Mammary epithelial cell (primary cell): ENCODE measurements at regions of chr6 and their contacts with region 1.

Region 1: DNA sequence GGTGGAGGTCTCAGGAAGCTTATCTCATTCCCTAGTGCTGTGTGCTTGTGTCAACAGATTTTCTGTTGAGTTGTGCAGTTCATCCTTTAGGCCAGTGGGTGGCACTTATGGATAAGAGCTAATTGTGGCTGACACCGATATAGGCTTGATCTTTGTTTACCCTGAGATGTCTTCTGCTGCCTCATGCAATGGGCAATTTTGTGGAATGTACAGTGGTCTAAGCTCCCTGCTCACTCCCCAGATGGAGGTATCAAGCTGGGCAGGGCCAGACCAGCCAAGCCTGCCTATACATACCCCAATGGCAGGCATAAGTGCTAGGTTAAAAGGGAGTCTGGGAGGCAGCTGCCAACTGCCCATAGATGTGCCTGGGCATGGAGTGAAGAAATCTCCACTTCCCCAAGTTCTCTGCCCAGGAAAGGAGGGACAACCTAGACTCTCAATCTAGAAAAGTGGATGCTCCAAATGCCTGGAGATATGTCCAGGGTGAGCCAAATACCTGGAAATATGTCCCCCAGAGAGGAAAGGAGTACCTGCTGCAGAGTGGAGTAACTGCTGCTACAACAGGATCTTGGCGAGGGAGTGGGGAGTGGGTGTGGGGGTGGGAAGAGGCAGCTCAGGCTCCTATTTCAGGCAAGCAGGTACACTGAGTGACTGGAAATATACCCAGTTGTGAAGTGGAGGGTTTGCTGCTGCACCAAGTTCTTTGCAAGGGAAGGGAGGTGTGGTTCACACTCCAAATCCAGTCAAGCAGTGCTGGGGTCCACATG is 53.2 kb upstream of the ARG1 start:
- DNase-seq: peak; percentile 29
- H3K4me3 ChIP-seq: no peak overlapping the region
- H3K27ac ChIP-seq: no peak overlapping the region
- H3K4me1 ChIP-seq: no peaks in the 10 kb centered on the region
- H3K27me3 ChIP-seq: peaks cover 2% of the 10 kb centered on the region
- CTCF ChIP-seq: peak; percentile 45 to 72

Region 2: DNA sequence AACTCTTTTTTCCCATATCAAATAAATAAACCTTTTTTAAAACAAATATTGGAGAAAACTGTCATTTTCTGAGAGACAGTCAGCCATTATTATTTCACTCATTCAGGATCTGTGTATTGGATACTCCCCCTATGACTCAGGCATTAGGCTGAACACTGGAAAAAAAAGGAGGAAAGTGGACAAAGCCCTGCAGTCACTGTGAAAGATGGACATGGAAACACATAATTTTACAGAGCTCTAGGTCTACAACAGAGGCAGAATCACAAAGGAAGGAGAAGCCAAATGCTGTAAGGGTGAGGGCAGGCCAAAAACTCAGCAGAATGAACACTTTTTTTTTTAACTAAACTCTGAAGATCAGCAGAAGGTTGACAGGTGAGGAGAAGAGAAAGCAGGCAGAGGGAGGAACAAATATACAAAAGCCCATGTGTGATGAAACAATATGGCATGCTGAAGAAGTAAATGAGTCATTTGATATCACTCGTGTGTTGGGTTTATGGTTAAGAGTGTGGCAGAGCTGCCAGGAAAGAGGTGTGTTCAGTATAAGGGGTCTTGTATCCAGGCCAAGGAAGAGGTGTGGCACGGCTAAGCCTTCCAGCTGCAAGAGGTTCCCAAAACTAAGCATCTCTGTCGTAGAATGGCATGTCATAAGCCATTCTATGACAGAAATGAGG is 495.9 kb before region 1 on chr6:
- CTCF ChIA-PET with region 1: no interaction called
- dilution Hi-C with region 1: no loop called
- in situ Hi-C with region 1: no loop called
- intact Hi-C with region 1: no loop called
- DNase-seq: peak; percentile 80
- H3K4me3 ChIP-seq: peak overlapping the region in 2 of 3 experiments; percentile 12 to 26
- H3K27ac ChIP-seq: peak overlapping the region; percentile 50
- H3K4me1 ChIP-seq: peaks cover 11% of the 10 kb centered on the region
- H3K27me3 ChIP-seq: no peaks in the 10 kb centered on the region
- CTCF ChIP-seq: no peak

Region 3: DNA sequence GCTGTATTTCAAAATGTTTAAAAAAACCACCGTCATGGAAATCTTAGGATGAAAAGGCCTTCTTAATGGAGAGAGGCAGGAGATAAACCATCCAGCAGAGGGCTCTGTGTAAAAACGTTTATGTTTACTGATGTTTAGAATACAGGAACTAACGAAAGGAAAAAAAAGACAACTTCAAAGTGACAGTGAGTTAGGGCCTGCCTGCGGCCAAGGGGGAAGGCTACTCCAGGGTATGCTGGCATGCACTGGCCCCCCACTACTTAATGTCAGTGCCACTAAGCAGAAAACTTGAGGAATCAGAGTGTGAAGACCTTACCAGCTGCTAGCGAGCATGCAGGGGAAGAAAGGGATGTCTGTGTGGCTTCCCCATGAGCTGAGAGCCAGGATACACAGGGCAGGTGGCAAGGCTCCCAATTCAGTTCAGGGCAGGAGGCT is 336.8 kb before region 1 on chr6:
- CTCF ChIA-PET with region 1: no interaction called
- dilution Hi-C with region 1: no loop called
- in situ Hi-C with region 1: loop called (anchors 10 to 25 kb)
- intact Hi-C with region 1: no loop called
- DNase-seq: no peak
- H3K4me3 ChIP-seq: no peak overlapping the region
- H3K27ac ChIP-seq: no peak overlapping the region
- H3K4me1 ChIP-seq: no peaks in the 10 kb centered on the region
- H3K27me3 ChIP-seq: no peaks in the 10 kb centered on the region
- CTCF ChIP-seq: peak; percentile 22 to 44

Region 4: GRCh38 chr6:131331151-131331550 is 188.7 kb before region 1 on chr6:
- CTCF ChIA-PET with region 1: no interaction called
- dilution Hi-C with region 1: no loop called
- in situ Hi-C with region 1: no loop called
- intact Hi-C with region 1: no loop called
- DNase-seq: no peak
- H3K4me3 ChIP-seq: no peak overlapping the region
- H3K27ac ChIP-seq: no peak overlapping the region
- H3K4me1 ChIP-seq: no peaks in the 10 kb centered on the region
- H3K27me3 ChIP-seq: peaks cover 5% of the 10 kb centered on the region
- CTCF ChIP-seq: no peak

Region 5: GRCh38 chr6:131627724-131628682 is 108.2 kb after region 1 on chr6 and contains the start of gene MED23:
- CTCF ChIA-PET with region 1: no interaction called
- dilution Hi-C with region 1: no loop called
- in situ Hi-C with region 1: no loop called
- intact Hi-C with region 1: loop called (anchors 1 kb)
- DNase-seq: peak; percentile 94
- H3K4me3 ChIP-seq: peak within 1 kb of the TSS; percentile 72 to 99 (median 90)
- H3K27ac ChIP-seq: peak within 1 kb of the TSS; percentile 77
- H3K4me1 ChIP-seq: peaks cover 3% of the 10 kb centered on the region
- H3K27me3 ChIP-seq: no peaks in the 10 kb centered on the region
- CTCF ChIP-seq: peak; percentile 96 to 99
- total RNA-seq, gene MED23: 20.7 to 31.3 TPM